B cell (primary cell): ENCODE measurements at regions of chr10 and their contacts with region 1.

Region 1: DNA sequence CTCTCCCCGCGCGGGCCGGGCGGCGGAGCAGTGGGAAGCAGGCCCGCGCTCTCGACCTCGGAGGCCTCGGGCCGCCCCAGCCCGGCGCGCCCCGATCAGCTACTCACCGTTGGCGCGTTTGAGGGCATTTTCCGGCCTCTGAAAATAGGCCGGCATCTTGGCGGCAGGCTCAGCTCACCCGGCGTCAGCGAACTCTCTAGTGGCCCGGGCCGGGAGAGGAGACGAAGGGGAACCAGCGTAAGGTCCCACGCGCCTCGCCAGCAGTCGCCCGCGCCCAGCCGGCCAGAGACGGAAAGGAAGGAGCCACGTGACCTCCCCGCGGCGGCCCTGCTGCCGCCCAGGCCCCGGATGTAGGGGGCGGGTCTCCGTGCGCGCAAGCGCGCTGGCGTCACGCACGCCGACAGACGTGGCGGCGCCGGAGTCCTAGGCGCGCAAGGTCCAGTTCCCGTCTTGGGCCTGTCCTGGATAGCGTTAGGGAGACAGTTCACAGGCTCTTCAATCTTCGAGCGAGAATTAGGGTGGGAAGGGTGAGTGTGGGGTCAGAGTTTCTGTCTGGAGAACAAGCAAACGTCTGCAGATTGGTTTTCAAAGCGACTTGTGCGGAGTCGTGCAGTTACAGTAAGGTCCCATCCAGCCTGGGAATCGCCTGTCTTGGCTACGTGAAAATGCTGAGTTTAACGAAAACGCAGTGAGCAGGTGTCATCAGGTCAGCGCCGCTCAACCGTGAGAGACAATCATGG is at the start of gene EIF3A:
- DNase-seq: peak; percentile 95
- ATAC-seq: peak; percentile 81
- H3K4me3 ChIP-seq: peak within 1 kb of the TSS; percentile 69 to 93 (median 86)
- H3K4me3 Mint-ChIP-seq: peak within 1 kb of the TSS; percentile 96
- H3K27ac ChIP-seq: peak within 1 kb of the TSS; percentile 92 to 97
- H3K27ac Mint-ChIP-seq: peak within 1 kb of the TSS; percentile 96
- H3K4me1 ChIP-seq: peaks cover 36 to 52% of the 10 kb centered on the region in 2 donors
- H3K4me1 Mint-ChIP-seq: peaks cover 50% of the 10 kb centered on the region
- H3K27me3 ChIP-seq: no peaks in the 10 kb centered on the region
- H3K27me3 Mint-ChIP-seq: no peaks in the 10 kb centered on the region
- CTCF ChIP-seq: no peak
- total RNA-seq, gene EIF3A: 94.3 and 94.5 TPM in 2 replicates

Region 2: GRCh38 chr10:117483056-117483604 is 1597.6 kb before region 1 on chr10:
- CTCF ChIA-PET with region 1: no interaction called
- POLR2A ChIA-PET with region 1: no interaction called
- intact Hi-C with region 1: no loop called
- DNase-seq: no peak
- ATAC-seq: no peak
- H3K4me3 ChIP-seq: no peak overlapping the region
- H3K4me3 Mint-ChIP-seq: no peak overlapping the region
- H3K27ac ChIP-seq: no peak overlapping the region
- H3K27ac Mint-ChIP-seq: no peak overlapping the region
- H3K4me1 ChIP-seq: peaks cover 3 to 7% of the 10 kb centered on the region in 2 donors
- H3K4me1 Mint-ChIP-seq: peaks cover 8% of the 10 kb centered on the region
- H3K27me3 ChIP-seq: peaks cover 0 to 3% (median 1%) of the 10 kb centered on the region in 4 experiments
- H3K27me3 Mint-ChIP-seq: peaks cover 1% of the 10 kb centered on the region
- CTCF ChIP-seq: no peak

Region 3: GRCh38 chr10:118712930-118713634 is 367.6 kb before region 1 on chr10:
- CTCF ChIA-PET with region 1: no interaction called
- POLR2A ChIA-PET with region 1: no interaction called
- intact Hi-C with region 1: no loop called
- DNase-seq: no peak
- ATAC-seq: no peak
- H3K4me3 ChIP-seq: no peak overlapping the region
- H3K4me3 Mint-ChIP-seq: no peak overlapping the region
- H3K27ac ChIP-seq: no peak overlapping the region
- H3K27ac Mint-ChIP-seq: no peak overlapping the region
- H3K4me1 ChIP-seq: no peaks in the 10 kb centered on the region
- H3K4me1 Mint-ChIP-seq: no peaks in the 10 kb centered on the region
- H3K27me3 ChIP-seq: no peaks in the 10 kb centered on the region
- H3K27me3 Mint-ChIP-seq: no peaks in the 10 kb centered on the region
- CTCF ChIP-seq: no peak

Region 4: DNA sequence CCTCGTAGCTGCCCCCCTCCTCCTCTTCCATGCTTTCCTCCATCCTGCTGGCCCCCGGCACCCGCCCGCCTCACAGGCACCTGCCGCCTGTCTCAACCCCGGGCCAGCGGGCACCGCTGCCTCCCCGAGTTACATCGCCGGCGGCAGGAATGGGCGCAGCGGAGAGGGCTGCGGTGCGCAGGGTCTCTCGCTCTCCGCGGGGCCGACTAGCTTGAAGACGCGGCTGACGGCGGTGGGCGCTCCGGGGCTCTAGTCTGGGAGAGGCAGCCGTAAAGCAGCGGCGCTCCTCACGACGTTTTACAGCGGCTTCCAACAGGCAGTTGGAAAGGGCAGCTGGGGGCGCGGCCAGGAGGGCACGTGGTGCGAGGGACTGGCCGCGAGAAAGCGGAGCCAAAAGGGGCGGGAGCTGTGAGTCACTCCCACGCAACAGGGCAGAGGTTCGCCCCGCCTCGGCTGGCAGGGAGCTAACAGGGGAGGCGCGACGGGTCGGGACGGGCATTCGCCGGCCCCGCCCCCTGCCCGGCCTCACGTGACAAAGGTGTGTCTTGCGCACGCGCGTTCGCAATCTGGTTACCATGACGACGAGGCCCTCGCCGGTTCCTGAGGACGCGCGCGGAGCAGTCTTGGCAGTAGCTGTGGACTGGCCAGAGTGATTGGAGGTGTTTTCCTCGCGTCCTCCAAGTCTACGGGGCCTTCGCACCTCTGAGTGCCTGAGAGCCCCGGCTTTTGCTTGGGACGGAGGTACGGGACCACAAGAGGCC is 325.8 kb before region 1 on chr10 and contains the start of gene CACUL1:
- CTCF ChIA-PET with region 1: no interaction called
- POLR2A ChIA-PET with region 1: no interaction called
- intact Hi-C with region 1: loop called (anchors 2 kb)
- DNase-seq: peak; percentile 100
- ATAC-seq: peak; percentile 97
- H3K4me3 ChIP-seq: peak within 1 kb of the TSS; percentile 80 to 98 (median 93)
- H3K4me3 Mint-ChIP-seq: peak within 1 kb of the TSS; percentile 96
- H3K27ac ChIP-seq: peak within 1 kb of the TSS; percentile 84 to 93
- H3K27ac Mint-ChIP-seq: peak within 1 kb of the TSS; percentile 89
- H3K4me1 ChIP-seq: peaks cover 25 to 26% of the 10 kb centered on the region in 2 donors
- H3K4me1 Mint-ChIP-seq: peaks cover 42% of the 10 kb centered on the region
- H3K27me3 ChIP-seq: no peaks in the 10 kb centered on the region
- H3K27me3 Mint-ChIP-seq: no peaks in the 10 kb centered on the region
- CTCF ChIP-seq: no peak
- total RNA-seq, gene CACUL1: 37.4 and 39.5 TPM in 2 replicates

Region 5: GRCh38 chr10:119061352-119061751 is 19.3 kb before region 1 on chr10:
- CTCF ChIA-PET with region 1: no interaction called
- POLR2A ChIA-PET with region 1: interaction called, 10 read pairs
- intact Hi-C with region 1: no loop called
- DNase-seq: peak; percentile 23
- ATAC-seq: no peak
- H3K4me3 ChIP-seq: no peak overlapping the region
- H3K4me3 Mint-ChIP-seq: no peak overlapping the region
- H3K27ac ChIP-seq: peak overlapping the region in 1 of 2 donors; percentile 17
- H3K27ac Mint-ChIP-seq: peak overlapping the region; percentile 53
- H3K4me1 ChIP-seq: peaks cover 2 to 12% of the 10 kb centered on the region in 2 donors
- H3K4me1 Mint-ChIP-seq: peaks cover 20% of the 10 kb centered on the region
- H3K27me3 ChIP-seq: no peaks in the 10 kb centered on the region
- H3K27me3 Mint-ChIP-seq: no peaks in the 10 kb centered on the region
- CTCF ChIP-seq: no peak

Region 6: DNA sequence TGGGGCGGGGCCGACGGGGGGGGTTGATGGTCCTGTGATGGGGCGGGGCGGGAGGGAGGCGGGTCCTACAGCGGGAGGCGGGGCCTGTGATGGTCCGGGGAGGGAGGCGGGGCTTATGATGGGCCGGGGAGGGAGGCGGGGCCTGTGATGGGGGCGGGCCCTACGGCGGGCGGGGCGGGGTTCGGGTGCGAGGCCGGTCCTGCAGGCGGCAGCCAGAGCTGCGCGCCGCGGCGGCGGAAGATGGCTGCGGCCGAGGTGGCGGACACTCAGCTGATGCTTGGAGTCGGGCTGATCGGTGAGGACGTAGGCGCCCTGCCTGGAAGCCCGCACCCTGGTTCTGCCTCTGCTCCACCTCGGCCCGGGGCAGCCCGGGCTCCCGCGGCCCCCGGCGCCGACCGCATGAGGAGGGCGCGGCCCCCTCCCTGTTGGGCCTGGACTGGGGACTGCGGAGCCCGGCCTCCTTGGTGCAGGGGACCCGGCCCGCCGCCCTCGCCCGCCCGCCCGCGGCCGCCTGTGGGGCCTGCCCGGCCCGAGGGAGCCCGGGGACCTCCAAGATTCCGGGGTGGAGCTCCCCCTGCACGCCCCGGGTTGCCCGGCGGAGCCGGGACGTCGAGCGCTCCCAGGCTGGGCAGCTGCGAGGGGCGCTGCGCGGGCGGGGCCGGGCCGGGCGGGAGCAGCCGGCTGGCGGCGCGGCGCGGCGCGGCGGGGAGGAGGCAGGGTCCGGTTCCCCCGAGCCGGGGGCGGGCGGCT is 23.4 kb after region 1 on chr10 and contains the start of gene DENND10:
- CTCF ChIA-PET with region 1: interaction called, 4 read pairs
- POLR2A ChIA-PET with region 1: interaction called, 10 read pairs
- intact Hi-C with region 1: loop called (anchors 1 kb)
- DNase-seq: peak; percentile 86
- ATAC-seq: peak; percentile 89
- H3K4me3 ChIP-seq: peak within 1 kb of the TSS; percentile 38 to 77 (median 68)
- H3K4me3 Mint-ChIP-seq: peak within 1 kb of the TSS; percentile 84
- H3K27ac ChIP-seq: peak within 1 kb of the TSS; percentile 2 to 4
- H3K27ac Mint-ChIP-seq: peak within 1 kb of the TSS; percentile 71
- H3K4me1 ChIP-seq: peaks cover 6 to 12% of the 10 kb centered on the region in 2 donors
- H3K4me1 Mint-ChIP-seq: peaks cover 10% of the 10 kb centered on the region
- H3K27me3 ChIP-seq: no peaks in the 10 kb centered on the region
- H3K27me3 Mint-ChIP-seq: no peaks in the 10 kb centered on the region
- CTCF ChIP-seq: no peak
- total RNA-seq, gene DENND10: 24.4 and 30.0 TPM in 2 replicates

Region 7: DNA sequence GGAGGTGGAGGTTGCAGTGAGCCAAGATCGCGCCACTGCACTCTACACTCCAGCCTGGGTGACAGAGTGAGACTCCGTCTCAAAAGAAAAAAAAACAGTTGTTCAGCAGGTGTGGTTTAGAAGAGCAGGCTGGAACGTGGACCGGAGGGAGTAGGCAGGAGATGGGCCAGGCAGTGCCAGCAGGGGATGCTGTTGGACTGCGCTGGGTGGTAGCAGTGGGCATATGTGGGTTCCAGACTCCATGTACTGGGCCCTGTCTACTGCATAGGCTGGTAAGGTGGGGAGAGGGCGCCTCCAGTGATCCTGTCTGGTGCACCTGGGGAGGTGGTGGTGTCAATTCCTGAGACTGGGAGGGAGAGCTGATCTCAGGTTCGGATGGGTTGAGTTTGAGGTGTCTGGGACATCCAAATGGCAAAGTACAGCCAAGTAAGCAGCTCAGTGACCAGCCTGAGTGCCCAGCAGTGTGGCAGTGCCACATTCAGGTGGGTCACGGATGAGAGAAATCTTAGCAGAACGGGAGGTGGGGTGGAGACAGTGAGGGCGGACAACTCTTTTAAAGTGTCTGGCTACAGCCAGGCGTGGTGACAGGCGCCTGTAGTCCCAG is 58.9 kb after region 1 on chr10:
- CTCF ChIA-PET with region 1: no interaction called
- POLR2A ChIA-PET with region 1: no interaction called
- intact Hi-C with region 1: no loop called
- DNase-seq: peak; percentile 46
- ATAC-seq: peak; percentile 68
- H3K4me3 ChIP-seq: no peak overlapping the region
- H3K4me3 Mint-ChIP-seq: no peak overlapping the region
- H3K27ac ChIP-seq: no peak overlapping the region
- H3K27ac Mint-ChIP-seq: peak overlapping the region; percentile 23
- H3K4me1 ChIP-seq: no peaks in the 10 kb centered on the region
- H3K4me1 Mint-ChIP-seq: peaks cover 4% of the 10 kb centered on the region
- H3K27me3 ChIP-seq: no peaks in the 10 kb centered on the region
- H3K27me3 Mint-ChIP-seq: no peaks in the 10 kb centered on the region
- CTCF ChIP-seq: peak; percentile 46

Region 8: DNA sequence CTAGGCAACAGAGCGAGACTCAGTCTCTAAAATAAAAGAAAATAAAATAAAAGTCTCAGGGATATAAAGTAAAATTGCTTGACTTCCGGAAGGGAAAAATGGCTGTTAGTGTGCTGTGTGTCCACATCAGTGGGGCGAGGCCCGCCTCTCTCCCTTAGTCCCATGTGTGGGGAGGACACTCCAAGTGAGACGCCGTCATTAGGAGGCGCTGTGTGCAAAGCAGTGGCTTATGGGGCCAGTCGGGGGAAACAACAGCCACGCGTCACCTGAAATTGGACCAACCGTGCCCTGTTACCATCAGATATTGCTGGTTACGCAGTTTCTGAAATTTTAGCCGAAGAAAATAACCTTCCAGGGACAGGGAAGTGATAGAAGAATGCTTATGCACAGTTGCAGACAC is 69.0 kb after region 1 on chr10:
- CTCF ChIA-PET with region 1: no interaction called
- POLR2A ChIA-PET with region 1: no interaction called
- intact Hi-C with region 1: no loop called
- DNase-seq: no peak
- ATAC-seq: no peak
- H3K4me3 ChIP-seq: no peak overlapping the region
- H3K4me3 Mint-ChIP-seq: no peak overlapping the region
- H3K27ac ChIP-seq: no peak overlapping the region
- H3K27ac Mint-ChIP-seq: no peak overlapping the region
- H3K4me1 ChIP-seq: no peaks in the 10 kb centered on the region
- H3K4me1 Mint-ChIP-seq: no peaks in the 10 kb centered on the region
- H3K27me3 ChIP-seq: no peaks in the 10 kb centered on the region
- H3K27me3 Mint-ChIP-seq: no peaks in the 10 kb centered on the region
- CTCF ChIP-seq: no peak

Region 9: DNA sequence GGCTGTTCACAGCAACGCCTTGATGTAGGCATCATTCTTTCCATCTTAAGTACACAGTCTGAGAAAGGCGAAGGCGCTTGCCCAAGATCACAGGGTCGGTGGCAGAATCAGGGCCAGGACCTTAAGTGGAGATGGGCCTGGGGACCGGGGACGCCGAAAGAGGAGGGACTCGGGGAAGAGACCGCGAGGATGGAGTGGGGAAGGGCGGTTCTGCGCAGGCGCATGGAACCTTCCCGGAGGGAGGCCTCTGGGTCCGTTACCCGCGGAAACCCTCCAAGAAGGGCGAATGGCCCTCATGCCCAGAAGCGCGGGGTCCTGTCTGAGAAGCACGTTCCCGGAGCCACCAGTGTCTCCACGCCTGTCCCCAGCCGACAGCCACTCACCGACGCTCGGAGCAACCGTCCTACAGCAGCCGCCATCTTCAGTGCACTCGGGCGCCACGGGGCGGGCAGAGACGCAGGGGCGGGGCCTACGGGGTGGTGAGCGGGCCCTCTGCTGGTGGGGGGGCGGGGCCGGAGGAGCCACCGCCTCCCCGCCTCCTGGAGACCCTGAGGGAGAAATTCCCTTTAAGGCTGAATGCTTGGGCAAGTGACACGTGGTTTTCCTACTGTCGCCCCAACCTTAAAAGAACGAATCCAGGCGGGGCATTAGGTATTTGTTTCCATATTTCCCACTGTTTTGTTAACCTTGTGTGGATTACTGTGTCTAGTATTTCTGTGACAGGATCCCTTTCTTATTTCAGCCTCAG is 97.9 kb after region 1 on chr10 and contains the start of gene PRDX3:
- CTCF ChIA-PET with region 1: no interaction called
- POLR2A ChIA-PET with region 1: interaction called, 4 read pairs
- intact Hi-C with region 1: loop called (anchors 1 kb)
- DNase-seq: peak; percentile 92
- ATAC-seq: peak; percentile 99
- H3K4me3 ChIP-seq: peak within 1 kb of the TSS; percentile 88 to 98 (median 89)
- H3K4me3 Mint-ChIP-seq: peak within 1 kb of the TSS; percentile 94
- H3K27ac ChIP-seq: peak within 1 kb of the TSS; percentile 68 to 71
- H3K27ac Mint-ChIP-seq: peak within 1 kb of the TSS; percentile 90
- H3K4me1 ChIP-seq: peaks cover 11 to 15% of the 10 kb centered on the region in 2 donors
- H3K4me1 Mint-ChIP-seq: peaks cover 28% of the 10 kb centered on the region
- H3K27me3 ChIP-seq: no peaks in the 10 kb centered on the region
- H3K27me3 Mint-ChIP-seq: no peaks in the 10 kb centered on the region
- CTCF ChIP-seq: peak; percentile 29
- total RNA-seq, gene PRDX3: 36.2 and 36.3 TPM in 2 replicates